Caco-2 (cell line): ENCODE measurements at regions of chr5 and their contacts with region 1.

Region 1: DNA sequence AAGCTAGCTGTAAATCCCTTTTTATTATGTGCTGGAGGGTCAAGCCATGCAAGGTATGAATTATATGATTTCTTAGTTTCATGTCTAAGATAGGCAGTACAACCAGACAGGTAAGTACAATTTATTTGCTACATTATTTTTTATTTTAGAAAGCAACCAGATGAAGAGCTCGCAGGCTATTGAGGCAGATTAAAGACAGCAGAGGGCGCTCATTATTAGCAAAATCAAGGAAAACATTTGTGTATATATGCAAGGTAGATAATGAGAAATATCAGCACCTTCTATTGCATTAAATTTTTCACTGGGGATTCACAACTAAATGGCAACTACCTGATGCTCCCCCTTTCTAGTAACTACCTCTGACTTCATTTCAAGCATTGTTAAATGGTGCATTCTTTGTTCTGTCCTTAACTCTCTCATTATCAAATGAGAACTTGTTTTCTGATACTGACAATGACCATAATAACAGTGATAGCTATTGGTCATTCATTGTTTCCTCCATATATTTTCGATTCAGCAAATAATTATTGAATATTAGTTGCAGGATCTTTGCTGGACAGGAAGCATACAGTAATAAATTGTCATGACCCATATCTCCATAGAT is 8.6 kb downstream of the SCGB3A2 start:
- DNase-seq: peak in 1 of 2 experiments; percentile 44
- H3K4me3 ChIP-seq: no peak overlapping the region
- H3K4me3 Mint-ChIP-seq: no peak overlapping the region
- H3K27ac Mint-ChIP-seq: no peak overlapping the region
- H3K4me1 ChIP-seq: peaks cover 6% of the 10 kb centered on the region
- H3K4me1 Mint-ChIP-seq: peaks cover 7% of the 10 kb centered on the region
- H3K27me3 ChIP-seq: no peaks in the 10 kb centered on the region
- H3K27me3 Mint-ChIP-seq: no peaks in the 10 kb centered on the region
- CTCF ChIP-seq: peak; percentile 56 to 64

Region 2: DNA sequence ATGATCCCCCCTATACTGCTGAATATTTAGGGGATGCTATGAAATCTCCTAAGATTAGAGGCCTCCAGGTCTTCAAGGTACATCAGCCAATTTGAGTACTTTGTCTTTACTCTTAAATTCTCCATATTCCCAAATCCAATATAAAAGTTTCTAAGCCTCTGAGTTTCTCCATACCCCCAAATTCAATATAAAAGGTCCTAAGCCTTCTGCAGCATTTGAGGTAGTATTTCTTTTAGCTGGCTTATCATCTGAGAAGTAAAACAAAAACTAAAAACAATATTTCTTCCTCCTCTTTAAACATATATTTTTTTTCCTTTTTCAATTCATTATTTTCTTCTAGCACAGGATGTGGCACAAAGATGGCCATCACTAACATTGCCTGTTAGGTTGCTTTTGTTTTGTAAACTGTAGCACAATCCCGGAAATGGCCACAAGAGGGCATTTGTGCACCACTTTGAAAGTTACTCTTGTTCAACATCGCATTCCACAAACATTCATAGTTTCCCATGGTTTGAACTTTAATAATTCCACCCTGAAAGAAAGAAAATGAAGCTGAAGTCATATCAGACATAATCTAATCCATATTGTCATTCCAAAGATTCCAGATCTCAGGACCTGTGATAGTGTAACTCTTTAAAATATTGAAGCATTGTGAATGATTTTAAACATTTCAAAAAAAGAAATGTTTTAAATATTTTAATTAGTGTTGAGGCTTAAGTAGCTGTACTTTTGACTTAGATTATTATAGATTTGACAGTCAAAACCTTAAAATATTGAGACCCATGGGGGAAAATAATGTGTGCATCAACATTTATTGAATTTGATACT is 29.6 kb before region 1 on chr5:
- CTCF ChIA-PET with region 1: interaction called, 4 read pairs
- POLR2A ChIA-PET with region 1: no interaction called
- intact Hi-C with region 1: loop called (anchors 1 kb)
- DNase-seq: peak; percentile 66 to 71
- H3K4me3 ChIP-seq: no peak overlapping the region
- H3K4me3 Mint-ChIP-seq: no peak overlapping the region
- H3K27ac Mint-ChIP-seq: no peak overlapping the region
- H3K4me1 ChIP-seq: no peaks in the 10 kb centered on the region; the same call in 1 of the 2 replicates
- H3K4me1 Mint-ChIP-seq: peaks cover 6% of the 10 kb centered on the region
- H3K27me3 ChIP-seq: no peaks in the 10 kb centered on the region
- H3K27me3 Mint-ChIP-seq: no peaks in the 10 kb centered on the region
- CTCF ChIP-seq: peak; percentile 77 to 81

Region 3: DNA sequence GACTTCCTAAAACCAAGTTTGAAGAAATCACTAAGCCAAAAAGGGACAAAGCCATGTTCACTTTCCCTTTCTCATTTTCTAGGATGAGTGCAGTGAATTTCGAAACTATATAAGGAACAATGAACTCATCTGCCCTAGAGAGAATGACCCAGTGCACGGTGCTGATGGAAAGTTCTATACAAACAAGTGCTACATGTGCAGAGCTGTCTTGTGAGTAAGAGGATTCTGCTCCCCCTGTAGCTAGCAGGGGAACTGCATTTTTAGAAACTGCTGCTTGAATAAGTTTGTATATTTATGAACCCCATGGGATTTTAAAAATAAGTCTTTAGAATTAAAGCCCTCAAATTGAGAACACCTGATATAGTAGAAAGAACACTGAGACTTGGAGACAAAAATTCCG is 238.5 kb after region 1 on chr5:
- CTCF ChIA-PET with region 1: no interaction called
- POLR2A ChIA-PET with region 1: no interaction called
- intact Hi-C with region 1: loop called (anchors 1 kb)
- DNase-seq: peak in 1 of 2 experiments; percentile 19
- H3K4me3 ChIP-seq: no peak overlapping the region
- H3K4me3 Mint-ChIP-seq: no peak overlapping the region
- H3K27ac Mint-ChIP-seq: no peak overlapping the region
- H3K4me1 ChIP-seq: no peaks in the 10 kb centered on the region
- H3K4me1 Mint-ChIP-seq: no peaks in the 10 kb centered on the region
- H3K27me3 ChIP-seq: no peaks in the 10 kb centered on the region
- H3K27me3 Mint-ChIP-seq: no peaks in the 10 kb centered on the region
- CTCF ChIP-seq: peak; percentile 38 to 46